ENCODE measurements at regions of chr6 and their contacts with region 1.

Region 1: GRCh38 chr6:95877480-95877879 is 138.3 kb upstream of the FUT9 start:
- DNase-seq: no peak
- ATAC-seq: no peak

Region 2: GRCh38 chr6:95935736-95936135 is 58.3 kb after region 1 on chr6:
- intact Hi-C with region 1: loop called (anchors 2 kb)
- DNase-seq: no peak
- ATAC-seq: no peak